ENCODE measurements at regions of chr1 and their contacts with region 1.

Region 1: GRCh38 chr1:94805912-94806311 is 14.2 kb upstream of the SLC44A3 start:
- H3K4me3 Mint-ChIP-seq: no peak overlapping the region
- H3K27ac Mint-ChIP-seq: no peak overlapping the region
- H3K4me1 Mint-ChIP-seq: peaks cover 27% of the 10 kb centered on the region
- H3K27me3 Mint-ChIP-seq: no peaks in the 10 kb centered on the region

Region 2: GRCh38 chr1:93324486-93325464 is 1481.1 kb before region 1 on chr1:
- intact Hi-C with region 1: no loop called
- H3K4me3 Mint-ChIP-seq: no peak overlapping the region
- H3K27ac Mint-ChIP-seq: no peak overlapping the region
- H3K4me1 Mint-ChIP-seq: peaks cover 8% of the 10 kb centered on the region
- H3K27me3 Mint-ChIP-seq: no peaks in the 10 kb centered on the region

Region 3: GRCh38 chr1:94481473-94481933 is 324.4 kb before region 1 on chr1:
- intact Hi-C with region 1: loop called (anchors 1 kb)
- H3K4me3 Mint-ChIP-seq: no peak overlapping the region
- H3K27ac Mint-ChIP-seq: no peak overlapping the region
- H3K4me1 Mint-ChIP-seq: no peaks in the 10 kb centered on the region
- H3K27me3 Mint-ChIP-seq: no peaks in the 10 kb centered on the region

Region 4: DNA sequence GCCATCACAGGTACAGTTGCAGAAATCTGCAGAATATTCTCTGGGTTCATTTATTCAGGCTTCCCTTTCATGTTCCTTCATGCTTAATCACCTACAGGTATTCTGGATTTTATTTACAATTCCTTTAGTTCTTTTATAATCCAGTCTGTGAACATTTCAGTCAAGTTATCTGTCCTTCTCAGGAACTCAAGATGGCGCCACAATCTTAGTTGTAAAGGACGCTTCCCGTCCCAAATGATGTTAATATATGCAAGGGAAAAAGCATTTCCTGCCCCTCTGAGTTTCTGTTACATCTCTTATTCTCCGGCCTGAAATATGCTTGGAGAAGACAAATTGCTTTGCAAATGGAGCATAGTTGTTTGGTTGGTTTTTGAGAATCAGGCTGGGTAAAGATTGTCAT is 283.6 kb before region 1 on chr1:
- intact Hi-C with region 1: loop called (anchors 1 kb)
- H3K4me3 Mint-ChIP-seq: no peak overlapping the region
- H3K27ac Mint-ChIP-seq: no peak overlapping the region
- H3K4me1 Mint-ChIP-seq: peaks cover 9% of the 10 kb centered on the region
- H3K27me3 Mint-ChIP-seq: peaks cover 2% of the 10 kb centered on the region

Region 5: GRCh38 chr1:95309031-95309471 is 503.1 kb after region 1 on chr1:
- intact Hi-C with region 1: no loop called
- H3K4me3 Mint-ChIP-seq: no peak overlapping the region
- H3K27ac Mint-ChIP-seq: no peak overlapping the region
- H3K4me1 Mint-ChIP-seq: no peaks in the 10 kb centered on the region
- H3K27me3 Mint-ChIP-seq: no peaks in the 10 kb centered on the region

Measured in dendritic cell treated with granulocyte-macrophage colony-stimulating factor and Interleukin-4, amounts not matched to agents 40 ng/mL and 50 ng/mL, for 4 days (primary cell).